BJ (cell line): ENCODE measurements at regions of chr1 and their contacts with region 1.

Region 1: DNA sequence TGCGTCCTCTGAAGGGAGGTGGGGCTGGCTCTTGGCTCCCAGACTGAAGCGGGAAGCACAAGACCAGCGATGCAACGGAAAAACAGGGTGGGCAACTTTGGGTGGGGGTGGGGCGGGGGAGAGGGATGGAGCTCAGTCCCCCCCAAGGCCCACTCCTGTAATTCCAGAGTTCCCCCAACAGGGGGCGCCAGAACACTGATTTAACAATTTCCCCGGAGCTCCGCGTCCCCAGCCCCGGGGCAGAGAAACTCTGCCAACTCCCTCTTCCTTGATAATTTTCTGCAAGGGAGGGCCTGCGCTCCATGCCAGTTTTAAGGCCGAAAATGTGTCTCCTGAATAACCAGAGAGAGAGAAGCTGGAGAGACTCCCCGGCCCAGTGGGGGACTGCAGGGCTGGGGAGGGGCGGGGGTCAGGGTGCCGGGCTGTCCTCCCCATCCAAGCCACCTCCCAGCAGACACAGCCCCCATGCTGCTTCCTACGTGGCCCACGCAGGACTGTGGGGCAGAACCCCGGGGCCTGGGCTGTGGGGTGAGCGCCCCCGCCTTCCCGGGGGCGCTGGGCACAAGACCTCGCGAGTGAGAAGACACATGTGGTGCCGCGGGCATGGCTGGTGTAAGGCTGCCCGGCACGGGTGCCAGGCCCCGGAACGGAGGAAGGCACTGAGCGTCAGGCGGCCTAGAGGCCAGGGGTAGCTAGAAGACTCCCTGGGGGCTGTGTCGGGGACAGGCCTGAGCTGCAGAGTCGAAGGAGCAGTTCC is 51.4 kb downstream of the KIF21B start:
- DNase-seq: no peak
- H3K4me3 ChIP-seq: no peak overlapping the region
- H3K27me3 ChIP-seq: no peaks in the 10 kb centered on the region
- CTCF ChIP-seq: peak; percentile 74

Region 2: DNA sequence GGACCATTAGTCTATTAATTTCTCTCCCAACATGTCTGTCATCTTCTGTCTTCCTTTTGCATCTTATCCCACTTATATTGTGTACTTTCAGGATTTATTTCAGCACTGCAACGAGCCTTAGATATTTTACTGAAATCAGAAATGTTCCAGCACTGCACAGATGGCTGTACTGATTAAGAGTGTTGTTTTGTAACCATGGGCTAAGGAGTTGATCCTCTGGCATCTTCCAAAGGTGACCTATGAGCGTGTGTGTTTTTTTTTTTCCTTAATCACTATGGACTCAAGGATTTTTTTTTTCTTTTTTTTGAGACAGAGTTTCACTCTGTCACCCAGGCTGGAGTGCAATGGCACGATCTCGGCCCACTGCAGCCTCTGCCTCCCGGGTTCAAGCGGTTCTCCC is 295.3 kb before region 1 on chr1:
- CTCF ChIA-PET with region 1: no interaction called
- POLR2A ChIA-PET with region 1: no interaction called
- DNase-seq: no peak
- H3K4me3 ChIP-seq: no peak overlapping the region
- H3K27me3 ChIP-seq: no peaks in the 10 kb centered on the region
- CTCF ChIP-seq: no peak

Region 3: GRCh38 chr1:200959411-200959921 is 12.7 kb before region 1 on chr1:
- CTCF ChIA-PET with region 1: interaction called, 25 read pairs
- POLR2A ChIA-PET with region 1: no interaction called
- DNase-seq: no peak
- H3K4me3 ChIP-seq: no peak overlapping the region
- H3K27me3 ChIP-seq: no peaks in the 10 kb centered on the region
- CTCF ChIP-seq: no peak

Region 4: DNA sequence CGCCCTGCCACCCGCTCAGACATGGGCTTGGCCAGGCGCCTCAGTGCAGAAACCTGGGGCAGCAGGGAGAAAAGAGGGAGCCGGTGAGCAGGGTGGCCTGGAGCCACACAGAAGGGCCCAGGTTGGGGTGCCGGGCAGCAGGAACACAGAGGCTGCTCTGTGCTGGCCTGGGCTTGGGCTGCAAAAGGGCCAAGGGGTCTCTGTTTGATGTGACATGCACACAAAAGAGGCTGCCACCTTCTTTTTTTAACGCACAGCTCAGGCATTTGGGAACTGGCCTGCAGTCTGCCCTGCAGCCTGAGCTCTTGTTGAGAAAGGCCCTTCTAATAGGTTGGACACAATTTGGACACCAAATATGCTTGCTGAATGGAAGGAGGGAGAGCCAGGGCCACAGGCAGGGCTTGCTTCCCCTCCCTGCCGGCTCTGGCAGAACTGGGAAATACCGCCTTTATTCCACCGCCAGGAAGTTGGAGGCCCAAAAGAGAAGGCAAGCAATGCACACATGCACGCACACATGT is 19.0 kb after region 1 on chr1:
- CTCF ChIA-PET with region 1: interaction called, 20 read pairs
- POLR2A ChIA-PET with region 1: no interaction called
- DNase-seq: no peak
- H3K4me3 ChIP-seq: no peak overlapping the region
- H3K27me3 ChIP-seq: no peaks in the 10 kb centered on the region; the same call in 1 of the 2 replicates
- CTCF ChIP-seq: no peak

Region 5: DNA sequence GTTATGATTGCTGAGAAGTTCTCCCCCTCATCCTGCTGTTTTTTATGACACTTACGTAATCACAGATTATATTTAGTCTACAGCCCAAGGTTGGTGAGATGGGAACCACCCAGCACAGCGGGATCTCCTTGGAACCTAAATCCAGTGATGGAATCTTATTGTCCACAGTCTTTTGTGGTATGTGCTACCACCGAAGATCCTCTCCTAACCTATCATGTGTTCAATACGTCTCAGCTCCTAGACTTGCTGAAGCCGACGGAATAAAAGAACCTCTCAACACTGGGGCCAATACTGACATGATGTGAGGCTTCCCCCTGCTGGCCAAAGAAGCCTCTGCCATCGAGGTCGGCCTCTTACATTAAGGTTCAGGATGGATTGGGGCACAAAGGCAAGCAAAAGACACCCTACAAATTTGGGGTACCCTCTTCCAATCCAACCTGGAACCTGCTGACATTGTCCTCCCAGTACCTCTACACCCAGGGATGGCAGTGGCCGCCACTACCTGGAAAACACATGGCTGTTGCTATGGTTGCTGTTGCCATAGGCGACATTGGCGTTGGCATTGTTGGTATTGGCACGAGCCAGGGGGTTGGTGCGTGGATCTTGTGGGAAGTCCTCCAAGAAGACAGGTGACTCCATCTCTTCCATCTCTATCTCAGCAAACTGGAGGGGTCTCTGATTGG is 70.8 kb after region 1 on chr1:
- CTCF ChIA-PET with region 1: interaction called, 65 read pairs
- POLR2A ChIA-PET with region 1: no interaction called
- DNase-seq: no peak
- H3K4me3 ChIP-seq: no peak overlapping the region
- H3K27me3 ChIP-seq: peaks cover 6% of the 10 kb centered on the region
- CTCF ChIP-seq: peak; percentile 86

Region 6: DNA sequence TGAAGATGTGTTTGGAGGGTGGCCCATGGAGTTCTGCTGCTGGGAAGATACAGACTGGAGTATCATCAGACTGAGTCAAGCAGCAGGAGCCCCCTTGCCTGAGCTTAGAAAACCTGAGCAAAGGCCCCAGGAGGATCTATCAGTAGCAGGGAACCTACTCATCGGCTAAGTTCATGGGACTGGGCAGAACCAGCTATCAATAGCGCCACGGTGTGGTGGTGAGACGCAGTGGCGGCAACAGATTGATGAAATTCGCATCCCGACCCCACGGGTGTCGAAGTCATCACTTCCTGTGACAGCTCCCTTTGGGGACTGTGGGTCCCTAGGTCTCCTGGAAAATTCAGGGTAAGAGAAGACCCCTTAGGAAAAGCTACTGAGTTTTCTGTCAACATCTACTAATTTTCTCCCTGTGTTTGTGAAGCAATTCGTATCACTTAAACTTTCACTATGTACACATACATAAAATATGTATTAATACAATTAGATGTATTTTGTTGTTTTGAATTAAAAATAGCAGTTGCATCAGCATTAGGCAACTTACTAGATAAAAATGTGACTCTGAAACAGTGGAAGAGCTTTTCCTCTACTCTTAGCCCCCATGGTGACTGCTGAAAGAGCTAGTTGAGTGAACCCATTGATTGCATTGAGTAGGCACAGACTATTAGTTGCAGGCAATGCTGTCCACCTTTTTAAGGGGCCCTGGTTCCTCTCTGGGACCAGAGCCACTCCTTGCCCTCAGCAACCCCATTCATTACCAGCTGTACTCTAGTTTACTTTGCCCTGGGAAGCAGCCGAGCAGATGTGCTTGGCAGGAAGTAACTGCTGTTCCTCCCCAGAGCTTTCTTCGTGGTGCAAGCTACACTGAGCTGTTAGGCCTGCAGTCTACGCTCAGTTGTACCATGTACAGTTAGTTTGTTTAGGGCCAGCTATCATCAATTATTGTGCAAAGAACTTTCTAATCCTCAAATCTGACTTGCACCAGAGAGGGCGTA is 147.4 kb after region 1 on chr1:
- CTCF ChIA-PET with region 1: interaction called, 24 read pairs
- POLR2A ChIA-PET with region 1: no interaction called
- DNase-seq: no peak
- H3K4me3 ChIP-seq: no peak overlapping the region
- H3K27me3 ChIP-seq: peaks cover 10% of the 10 kb centered on the region
- CTCF ChIP-seq: peak; percentile 47